ENCODE measurements at regions of chrX and their contacts with region 1.

Region 1: GRCh38 chrX:86014421-86014820 is 32.9 kb downstream of the CHM start:
- DNase-seq: peak; percentile 7 to 28
- ATAC-seq: peak; percentile 86 to 92 (median 86)
- H3K4me3 ChIP-seq: no peak overlapping the region
- H3K4me3 Mint-ChIP-seq: peak overlapping the region; percentile 71
- H3K27ac ChIP-seq: peak overlapping the region; percentile 69
- H3K27ac Mint-ChIP-seq: peak overlapping the region; percentile 84 to 89
- H3K4me1 ChIP-seq: peaks cover 18% of the 10 kb centered on the region
- H3K4me1 Mint-ChIP-seq: peaks cover 42 to 45% of the 10 kb centered on the region in 2 donors
- H3K27me3 ChIP-seq: no peaks in the 10 kb centered on the region
- H3K27me3 Mint-ChIP-seq: no peaks in the 10 kb centered on the region
- CTCF ChIP-seq: no peak

Region 2: GRCh38 chrX:85065512-85066198 is 948.8 kb before region 1 on chrX:
- intact Hi-C with region 1: no loop called
- DNase-seq: no peak
- ATAC-seq: no peak
- H3K4me3 ChIP-seq: no peak overlapping the region
- H3K4me3 Mint-ChIP-seq: no peak overlapping the region
- H3K27ac ChIP-seq: no peak overlapping the region
- H3K27ac Mint-ChIP-seq: no peak overlapping the region
- H3K4me1 ChIP-seq: no peaks in the 10 kb centered on the region
- H3K4me1 Mint-ChIP-seq: peaks cover 0 to 4% of the 10 kb centered on the region in 2 donors
- H3K27me3 ChIP-seq: no peaks in the 10 kb centered on the region
- H3K27me3 Mint-ChIP-seq: no peaks in the 10 kb centered on the region
- CTCF ChIP-seq: no peak

Region 3: GRCh38 chrX:86047174-86047935 is 32.9 kb after region 1 on chrX and contains the start of gene CHM:
- intact Hi-C with region 1: loop called (anchors 2 kb)
- DNase-seq: peak; percentile 35 to 85
- ATAC-seq: peak; percentile 91 to 96 (median 95)
- H3K4me3 ChIP-seq: peak within 1 kb of the TSS; percentile 74
- H3K4me3 Mint-ChIP-seq: no peak within 1 kb of the TSS
- H3K27ac ChIP-seq: peak within 1 kb of the TSS; percentile 87
- H3K27ac Mint-ChIP-seq: no peak within 1 kb of the TSS
- H3K4me1 ChIP-seq: peaks cover 2% of the 10 kb centered on the region
- H3K4me1 Mint-ChIP-seq: peaks cover 4 to 5% of the 10 kb centered on the region in 2 donors
- H3K27me3 ChIP-seq: peaks cover 2% of the 10 kb centered on the region
- H3K27me3 Mint-ChIP-seq: peaks cover 10 to 19% of the 10 kb centered on the region in 2 donors
- CTCF ChIP-seq: no peak
- total RNA-seq, gene CHM: 11.8 to 20.2 (median 16.5) TPM